ENCODE measurements at regions of chr1 and their contacts with region 1.

Region 1: GRCh38 chr1:117067533-117068370 is 7.6 kb downstream of the TTF2 start:
- DNase-seq: peak; percentile 34 to 41
- ATAC-seq: peak; percentile 84 to 94; a peak in 5 of 6 replicates
- H3K4me3 ChIP-seq: no peak overlapping the region
- H3K27ac ChIP-seq: no peak overlapping the region
- H3K4me1 ChIP-seq: no peaks in the 10 kb centered on the region
- CTCF ChIP-seq: peak; percentile 70
- EP300 ChIP-seq: no peak
- POLR2A ChIP-seq: no peak
- RAD21 ChIP-seq: peak; percentile 73 to 82

Region 2: GRCh38 chr1:117001254-117001927 is 66.4 kb before region 1 on chr1 and contains the start of gene CD101:
- CTCF ChIA-PET with region 1: no interaction called
- POLR2A ChIA-PET with region 1: no interaction called
- DNase-seq: no peak
- ATAC-seq: no peak
- H3K4me3 ChIP-seq: no peak within 1 kb of the TSS
- H3K27ac ChIP-seq: no peak within 1 kb of the TSS
- H3K4me1 ChIP-seq: peaks cover 26% of the 10 kb centered on the region
- CTCF ChIP-seq: no peak
- EP300 ChIP-seq: no peak
- POLR2A ChIP-seq: no peak
- RAD21 ChIP-seq: no peak
- polyA plus RNA-seq, gene CD101: 0.52 TPM in 2 replicates

Region 3: DNA sequence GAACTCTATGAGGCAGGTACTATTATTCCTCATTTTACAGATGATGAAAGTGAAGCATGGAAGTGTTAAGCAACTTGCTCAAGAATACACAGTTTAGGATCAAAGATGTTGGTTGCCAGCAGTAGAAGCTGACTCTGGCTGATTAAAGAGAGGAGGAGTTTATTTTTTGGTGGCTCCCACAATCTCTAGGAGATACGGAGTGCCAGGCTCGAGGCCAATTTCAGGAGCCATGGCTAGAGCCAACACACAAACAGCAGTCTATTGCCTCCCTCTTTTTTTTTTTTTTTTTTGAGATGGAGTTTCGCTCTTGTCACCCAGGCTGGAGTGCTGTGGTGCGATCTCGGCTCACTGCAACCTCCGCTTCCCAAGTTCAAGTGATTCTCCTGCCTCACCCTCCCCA is 12.0 kb after region 1 on chr1:
- CTCF ChIA-PET with region 1: interaction called, 21 read pairs
- POLR2A ChIA-PET with region 1: no interaction called
- DNase-seq: no peak
- ATAC-seq: no peak
- H3K4me3 ChIP-seq: no peak overlapping the region
- H3K27ac ChIP-seq: no peak overlapping the region
- H3K4me1 ChIP-seq: peaks cover 11% of the 10 kb centered on the region
- CTCF ChIP-seq: no peak
- EP300 ChIP-seq: no peak
- POLR2A ChIP-seq: no peak
- RAD21 ChIP-seq: no peak

Region 4: DNA sequence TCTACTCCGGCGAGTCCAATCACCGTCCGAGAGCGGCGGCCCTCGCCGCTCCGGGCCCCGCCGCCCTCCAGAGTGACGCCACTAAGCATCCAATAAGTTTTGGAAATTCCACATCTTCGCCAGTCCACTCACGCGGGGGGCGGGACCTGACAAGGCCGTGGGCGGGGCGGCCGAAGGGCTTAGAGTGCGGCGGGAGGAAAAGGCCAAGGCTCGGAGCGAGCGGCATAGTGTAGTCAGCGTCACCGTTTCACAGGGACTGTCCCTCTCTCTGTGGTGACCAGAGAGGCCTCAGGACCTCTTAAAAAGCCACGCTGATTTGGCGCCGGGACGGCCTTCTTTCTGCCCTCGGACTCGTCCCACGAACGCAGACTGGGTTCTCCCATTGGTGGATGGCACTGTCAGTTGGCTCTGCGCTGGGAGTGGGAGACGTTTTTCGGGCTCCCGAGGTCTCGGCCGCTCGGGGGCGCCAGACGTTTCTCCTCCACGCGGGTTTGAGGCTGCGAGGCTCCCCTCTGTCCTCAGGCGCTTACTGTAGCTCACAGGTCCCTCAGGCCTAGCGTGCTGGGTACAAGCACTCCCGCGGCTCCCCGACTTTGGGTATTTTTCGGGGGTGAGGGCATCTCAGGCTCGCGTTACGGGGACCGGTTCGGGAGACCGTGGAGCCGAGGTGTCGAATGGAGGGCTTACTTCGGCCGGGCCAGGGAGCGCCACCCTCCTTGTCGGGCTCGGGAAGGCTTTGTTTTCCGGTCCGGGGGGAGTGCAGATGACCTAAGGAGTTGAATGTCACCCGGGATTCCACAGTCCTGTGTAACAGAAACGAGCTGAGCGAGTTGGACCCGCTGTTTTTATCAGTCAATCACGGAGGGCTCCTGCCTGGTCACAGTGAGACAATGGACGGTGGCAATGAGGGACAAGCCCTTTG is 54.3 kb after region 1 on chr1:
- CTCF ChIA-PET with region 1: interaction called, 52 read pairs
- POLR2A ChIA-PET with region 1: no interaction called
- DNase-seq: peak; percentile 85 to 93
- ATAC-seq: peak; percentile 98 to 99
- H3K4me3 ChIP-seq: peak overlapping the region; percentile 60
- H3K27ac ChIP-seq: peak overlapping the region; percentile 83 to 93
- H3K4me1 ChIP-seq: peaks cover 5% of the 10 kb centered on the region; the same call in 2 of the 3 replicates
- CTCF ChIP-seq: peak; percentile 61
- EP300 ChIP-seq: no peak
- POLR2A ChIP-seq: no peak
- RAD21 ChIP-seq: peak; percentile 58 to 72

Region 5: GRCh38 chr1:117275055-117275454 is 207.3 kb after region 1 on chr1:
- CTCF ChIA-PET with region 1: interaction called, 13 read pairs
- POLR2A ChIA-PET with region 1: no interaction called
- DNase-seq: no peak
- ATAC-seq: no peak
- H3K4me3 ChIP-seq: no peak overlapping the region
- H3K27ac ChIP-seq: no peak overlapping the region
- H3K4me1 ChIP-seq: no peaks in the 10 kb centered on the region
- CTCF ChIP-seq: no peak
- EP300 ChIP-seq: no peak
- POLR2A ChIP-seq: no peak
- RAD21 ChIP-seq: no peak

Region 6: DNA sequence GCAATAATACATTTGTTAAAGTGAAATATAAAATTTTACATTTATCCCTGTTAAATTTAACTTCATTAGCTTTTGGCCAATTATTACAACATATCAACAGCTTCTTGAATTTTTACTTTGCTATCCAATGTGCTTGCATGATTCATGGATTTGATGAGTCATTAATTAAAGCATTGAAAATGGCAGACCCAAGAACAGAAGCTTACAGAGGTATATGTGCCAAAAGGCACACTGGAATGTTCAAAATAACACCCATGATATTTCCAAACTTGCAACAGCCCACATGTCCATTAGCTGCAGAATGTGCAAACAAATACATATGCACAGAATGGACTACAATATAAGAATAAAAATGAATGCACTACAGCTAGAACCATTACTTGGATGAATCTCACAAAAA is 223.1 kb after region 1 on chr1:
- CTCF ChIA-PET with region 1: interaction called, 126 read pairs
- POLR2A ChIA-PET with region 1: no interaction called
- DNase-seq: no peak
- ATAC-seq: no peak
- H3K4me3 ChIP-seq: no peak overlapping the region
- H3K27ac ChIP-seq: no peak overlapping the region
- H3K4me1 ChIP-seq: no peaks in the 10 kb centered on the region
- CTCF ChIP-seq: no peak
- EP300 ChIP-seq: no peak
- POLR2A ChIP-seq: no peak
- RAD21 ChIP-seq: no peak